ENCODE measurements at regions of chr5 and their contacts with region 1.

Region 1: DNA sequence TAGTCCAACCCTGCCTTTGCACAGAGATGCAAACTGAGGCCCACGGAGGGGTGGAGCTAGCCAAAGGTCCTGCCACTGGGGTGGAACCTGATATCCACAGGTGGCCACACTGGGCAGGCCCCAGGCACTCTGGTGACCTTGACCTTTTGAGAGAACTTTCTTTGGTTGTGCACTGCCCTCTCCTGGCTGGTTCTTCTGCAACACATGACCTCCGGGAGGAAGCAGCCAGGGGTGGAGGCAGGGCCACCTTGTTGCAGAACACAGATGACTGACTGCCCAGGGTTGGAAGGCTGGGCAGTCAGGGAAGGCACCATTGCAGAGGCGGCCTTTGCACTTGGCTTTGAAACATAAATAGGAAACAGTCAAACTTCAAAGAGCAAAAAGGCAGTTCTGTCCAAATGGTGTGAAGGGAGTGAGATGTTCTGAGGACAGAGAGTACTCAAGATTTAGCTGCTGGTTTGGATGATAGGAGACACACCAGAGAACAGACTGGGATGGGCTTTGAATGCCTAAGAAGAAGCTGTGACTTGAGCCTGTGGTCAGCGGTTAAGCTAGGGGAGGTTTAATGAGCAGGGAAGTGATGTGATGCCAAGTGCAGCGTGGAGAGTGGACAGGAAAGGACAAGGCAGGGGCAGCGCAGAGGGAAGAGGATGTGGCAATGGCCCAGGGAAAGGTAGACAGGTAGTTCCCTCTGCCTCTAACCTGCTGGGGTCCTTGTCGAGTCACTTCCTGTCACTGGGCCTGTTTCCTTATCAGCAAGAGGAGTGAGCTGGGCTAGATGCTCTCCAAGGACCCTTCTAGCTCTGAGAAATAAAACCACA is 6.8 kb upstream of the TCOF1 start:
- DNase-seq: peak; percentile 71
- ATAC-seq: peak; percentile 98
- H3K4me3 ChIP-seq: no peak overlapping the region
- H3K27ac ChIP-seq: no peak overlapping the region
- H3K4me1 ChIP-seq: no peaks in the 10 kb centered on the region
- H3K27me3 ChIP-seq: no peaks in the 10 kb centered on the region
- CTCF ChIP-seq: peak; percentile 83
- POLR2A ChIP-seq: no peak
- RAD21 ChIP-seq: peak; percentile 87

Region 2: DNA sequence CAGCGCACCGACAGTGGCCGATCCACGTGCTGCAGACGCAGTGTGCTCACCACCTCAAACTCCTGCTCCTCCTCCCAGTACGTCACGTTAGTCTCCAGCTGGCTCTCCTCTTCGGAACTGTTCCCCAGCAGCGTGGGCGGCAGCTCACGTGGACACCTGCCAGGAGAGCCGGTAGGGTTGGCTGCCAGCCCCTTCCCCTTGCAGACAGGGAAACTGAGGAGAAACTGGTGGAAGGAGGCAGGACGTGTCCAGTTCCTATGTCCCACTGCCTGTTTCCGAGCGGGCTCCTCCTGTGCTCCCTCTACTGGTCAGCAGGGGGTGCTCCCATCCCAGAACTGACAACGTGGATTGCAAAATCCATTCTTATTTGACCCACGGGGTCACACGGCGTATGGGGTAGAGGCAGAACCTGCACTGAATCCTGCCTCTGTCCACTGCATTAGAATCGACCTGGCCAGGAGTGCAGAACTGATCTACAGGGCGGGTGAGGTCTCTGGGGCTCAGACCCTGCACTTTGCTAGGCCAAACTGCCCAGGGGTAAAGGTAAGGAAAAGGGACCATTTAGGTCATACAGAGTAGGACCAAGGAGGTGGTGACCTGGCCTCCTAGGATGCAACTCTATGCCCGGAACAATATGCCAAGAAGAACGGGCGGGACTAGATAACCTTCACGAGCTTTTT is 220.8 kb before region 1 on chr5:
- CTCF ChIA-PET with region 1: no interaction called
- POLR2A ChIA-PET with region 1: no interaction called
- dilution Hi-C with region 1: no loop called
- in situ Hi-C with region 1: no loop called
- intact Hi-C with region 1: loop called (anchors 1 kb)
- DNase-seq: peak; percentile 78
- ATAC-seq: peak; percentile 87
- H3K4me3 ChIP-seq: no peak overlapping the region
- H3K27ac ChIP-seq: 0 out of 2 replicates have a peak overlapping the region, but pooled peaks have one; percentile 18
- H3K4me1 ChIP-seq: peaks cover 31% of the 10 kb centered on the region
- H3K27me3 ChIP-seq: no peaks in the 10 kb centered on the region
- CTCF ChIP-seq: peak; percentile 92
- POLR2A ChIP-seq: peak; percentile 42; the same call in 1 of the 2 replicates
- RAD21 ChIP-seq: peak; percentile 96

Region 3: GRCh38 chr5:150161242-150162141 is 189.2 kb before region 1 on chr5:
- CTCF ChIA-PET with region 1: no interaction called
- POLR2A ChIA-PET with region 1: no interaction called
- dilution Hi-C with region 1: no loop called
- in situ Hi-C with region 1: no loop called
- intact Hi-C with region 1: loop called (anchors 2 kb)
- DNase-seq: peak; percentile 65
- ATAC-seq: peak; percentile 91
- H3K4me3 ChIP-seq: no peak overlapping the region
- H3K27ac ChIP-seq: no peak overlapping the region
- H3K4me1 ChIP-seq: peaks cover 26% of the 10 kb centered on the region
- H3K27me3 ChIP-seq: no peaks in the 10 kb centered on the region
- CTCF ChIP-seq: peak; percentile 94
- POLR2A ChIP-seq: peak; percentile 8; the same call in 1 of the 2 replicates
- RAD21 ChIP-seq: peak; percentile 91

Region 4: DNA sequence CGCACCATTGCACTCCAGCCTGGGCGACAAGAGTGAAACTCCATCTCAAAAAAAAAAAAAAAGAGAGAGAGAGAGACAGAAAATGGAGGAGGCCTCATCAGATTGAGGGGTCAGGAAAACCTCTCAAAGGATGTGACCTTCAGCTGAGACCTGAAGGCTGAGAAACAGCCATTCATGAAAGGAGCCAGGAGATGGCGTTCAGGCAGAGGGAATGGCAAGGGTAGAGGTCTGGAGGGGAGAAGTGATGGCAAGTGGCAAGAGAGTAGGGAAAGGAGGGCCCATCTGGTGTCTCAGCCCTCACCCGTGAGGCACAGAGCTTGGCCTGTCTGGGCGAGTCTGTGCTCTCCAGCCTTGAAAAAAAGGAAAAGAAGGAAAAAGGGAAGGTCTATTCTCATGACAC is 78.2 kb before region 1 on chr5:
- CTCF ChIA-PET with region 1: interaction called, 24 read pairs
- POLR2A ChIA-PET with region 1: no interaction called
- dilution Hi-C with region 1: no loop called
- in situ Hi-C with region 1: loop called (anchors 5 kb)
- intact Hi-C with region 1: loop called (anchors 1 kb)
- DNase-seq: peak; percentile 52
- ATAC-seq: peak; percentile 89
- H3K4me3 ChIP-seq: no peak overlapping the region
- H3K27ac ChIP-seq: no peak overlapping the region
- H3K4me1 ChIP-seq: peaks cover 7% of the 10 kb centered on the region
- H3K27me3 ChIP-seq: no peaks in the 10 kb centered on the region
- CTCF ChIP-seq: peak; percentile 65
- POLR2A ChIP-seq: no peak
- RAD21 ChIP-seq: peak; percentile 88

Region 5: DNA sequence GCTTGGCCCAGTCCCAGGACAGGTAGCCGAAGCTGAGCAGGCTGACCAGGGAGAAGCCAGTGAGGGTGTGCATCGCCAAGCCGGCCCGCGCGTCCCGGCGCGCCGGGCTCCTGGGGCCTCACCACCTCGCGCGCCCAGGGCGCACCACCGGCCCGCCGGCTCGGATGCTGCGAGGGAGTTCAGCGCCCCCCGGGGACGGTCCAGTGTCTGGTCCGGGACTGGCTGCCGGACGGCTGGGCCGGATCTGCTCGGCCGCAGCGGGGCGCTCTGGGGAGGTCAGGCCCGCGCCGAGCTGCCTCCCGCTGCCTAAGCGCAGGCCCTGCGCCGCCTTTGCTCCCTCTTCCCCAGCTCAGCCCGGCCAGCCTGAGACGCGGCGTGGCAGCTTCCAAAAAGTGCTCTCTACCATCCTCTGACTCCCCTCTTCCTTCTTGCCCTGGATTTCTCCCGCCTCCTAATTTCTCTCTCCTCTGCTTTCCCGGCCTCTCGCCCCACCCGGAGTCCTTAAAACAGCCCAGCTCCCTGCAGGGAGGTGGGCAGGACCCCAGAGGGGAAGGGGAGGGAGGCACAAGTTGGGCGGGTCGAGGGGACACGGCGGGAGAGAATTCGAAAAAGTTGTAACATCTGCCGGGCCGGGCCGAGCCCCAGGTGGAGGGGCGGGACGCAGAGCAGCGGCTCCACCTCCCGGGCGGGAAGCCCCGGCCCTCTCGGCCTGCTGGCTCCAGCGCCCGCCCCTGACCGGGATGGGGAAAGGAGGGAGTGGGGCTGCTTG is 48.2 kb before region 1 on chr5 and contains the start of gene ARSI:
- CTCF ChIA-PET with region 1: no interaction called
- POLR2A ChIA-PET with region 1: no interaction called
- dilution Hi-C with region 1: no loop called
- in situ Hi-C with region 1: no loop called
- intact Hi-C with region 1: loop called (anchors 2 kb)
- DNase-seq: no peak
- ATAC-seq: peak; percentile 68
- H3K4me3 ChIP-seq: peak within 1 kb of the TSS; percentile 38
- H3K27ac ChIP-seq: peak within 1 kb of the TSS; percentile 93
- H3K4me1 ChIP-seq: peaks cover 45% of the 10 kb centered on the region
- H3K27me3 ChIP-seq: no peaks in the 10 kb centered on the region
- CTCF ChIP-seq: peak; percentile 53
- POLR2A ChIP-seq: no peak
- RAD21 ChIP-seq: peak; percentile 30
- total RNA-seq, gene ARSI: 15.0 and 15.2 TPM in 2 replicates